ENCODE measurements at regions of chr2 and their contacts with region 1.

Region 1: DNA sequence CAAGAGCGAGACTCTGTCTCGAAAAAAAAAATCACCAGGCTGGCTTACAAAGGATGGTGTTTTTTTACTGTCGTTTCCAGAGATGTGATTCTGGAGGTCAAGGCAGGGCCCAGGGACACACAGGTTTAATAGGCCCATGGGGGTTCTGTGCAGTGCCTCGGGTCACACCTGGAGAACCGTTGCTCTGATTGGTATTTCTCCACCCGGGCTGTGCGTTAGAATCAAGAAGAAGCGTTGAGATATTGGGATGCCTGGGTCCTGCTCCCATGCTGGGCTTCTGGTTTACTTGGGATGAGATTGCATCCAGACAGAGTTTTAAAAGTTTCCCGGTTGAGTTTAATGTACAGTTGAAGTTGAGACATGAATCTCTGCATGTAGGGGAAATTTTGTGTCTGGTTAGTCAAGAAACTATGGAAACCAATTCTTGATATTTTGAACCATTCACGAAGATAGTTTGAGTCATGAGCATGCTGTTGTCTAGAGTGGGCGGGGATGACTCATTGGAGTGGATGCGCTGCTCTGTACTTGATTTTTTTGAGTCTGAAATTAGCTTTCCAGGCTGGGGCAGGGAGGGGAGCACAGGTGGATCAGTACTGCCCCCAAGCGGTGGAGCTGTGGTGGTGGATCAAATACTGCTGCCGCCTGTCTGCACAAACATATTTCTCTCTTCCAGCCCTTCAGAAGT is 50.1 kb downstream of the GREB1 start:
- H3K4me3 ChIP-seq: no peak overlapping the region
- H3K27ac ChIP-seq: no peak overlapping the region
- H3K4me1 ChIP-seq: peaks cover 3% of the 10 kb centered on the region
- CTCF ChIP-seq: peak; percentile 81

Region 2: GRCh38 chr2:10832203-10832936 is 751.6 kb before region 1 on chr2:
- CTCF ChIA-PET with region 1: interaction called, 11 read pairs
- POLR2A ChIA-PET with region 1: no interaction called
- H3K4me3 ChIP-seq: no peak overlapping the region
- H3K27ac ChIP-seq: no peak overlapping the region
- H3K4me1 ChIP-seq: peaks cover 2% of the 10 kb centered on the region; the same call in 1 of the 2 replicates
- CTCF ChIP-seq: peak; percentile 95

Region 3: DNA sequence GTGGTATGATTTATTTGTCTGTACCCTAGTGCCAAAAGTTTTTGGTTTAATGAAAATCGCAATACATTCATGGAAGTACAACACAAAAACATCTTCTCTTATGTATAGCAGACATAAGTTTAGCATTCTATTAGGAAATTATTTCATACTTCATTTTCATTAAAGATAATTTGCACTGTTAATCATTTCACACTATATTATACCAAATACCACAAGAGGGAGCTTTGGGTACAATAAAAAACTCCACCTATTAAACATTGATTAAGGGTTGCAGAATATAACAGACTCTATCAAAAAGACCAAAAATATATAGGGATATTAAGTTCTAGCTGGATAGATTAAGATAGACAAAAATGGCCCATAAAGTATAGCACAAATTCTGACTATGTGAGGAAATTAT is 349.7 kb before region 1 on chr2:
- CTCF ChIA-PET with region 1: interaction called, 23 read pairs
- POLR2A ChIA-PET with region 1: no interaction called
- H3K4me3 ChIP-seq: no peak overlapping the region
- H3K27ac ChIP-seq: no peak overlapping the region
- H3K4me1 ChIP-seq: no peaks in the 10 kb centered on the region
- CTCF ChIP-seq: peak; percentile 40; the same call in 1 of the 2 replicates

Region 4: DNA sequence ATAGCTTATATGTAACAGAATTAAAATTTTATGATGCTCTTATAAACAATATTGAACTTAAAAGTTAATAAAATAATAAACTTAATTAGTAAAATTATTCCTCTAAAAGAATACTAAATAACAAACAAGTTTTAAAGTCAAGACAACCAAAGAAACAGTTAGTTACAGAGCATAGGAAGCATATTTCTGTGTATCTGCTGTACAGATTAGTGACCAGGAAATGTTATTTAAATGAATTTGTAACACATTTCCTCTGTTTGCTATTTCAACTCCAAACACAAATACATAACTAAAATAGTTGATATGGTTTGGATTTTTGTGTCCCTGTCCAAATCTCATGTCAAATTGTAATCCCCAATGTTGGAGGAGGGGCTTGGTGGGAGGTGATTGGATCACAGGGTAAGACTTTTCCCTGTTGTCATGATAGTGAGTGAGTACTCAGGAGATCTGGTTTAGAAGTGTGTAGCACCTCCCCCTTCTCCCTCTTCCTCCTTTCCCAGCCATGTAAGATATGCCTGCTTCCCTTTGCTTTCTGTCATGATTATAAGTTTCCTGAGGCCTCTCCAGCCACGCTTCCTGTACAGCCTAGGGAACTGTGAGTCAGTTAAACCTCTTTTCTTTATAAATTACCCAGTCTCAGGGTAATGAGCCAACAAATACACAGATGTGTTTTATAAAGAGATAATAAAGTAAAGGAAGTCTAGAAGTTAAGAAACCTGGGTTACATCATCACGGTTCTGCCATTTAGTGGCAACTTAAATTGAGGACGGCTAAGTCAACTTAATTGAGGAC is 291.3 kb before region 1 on chr2:
- CTCF ChIA-PET with region 1: no interaction called
- POLR2A ChIA-PET with region 1: no interaction called
- H3K4me3 ChIP-seq: no peak overlapping the region
- H3K27ac ChIP-seq: no peak overlapping the region
- H3K4me1 ChIP-seq: peaks cover 8% of the 10 kb centered on the region
- CTCF ChIP-seq: no peak

Region 5: GRCh38 chr2:11457935-11458334 is 126.0 kb before region 1 on chr2:
- CTCF ChIA-PET with region 1: interaction called, 13 read pairs
- POLR2A ChIA-PET with region 1: no interaction called
- H3K4me3 ChIP-seq: no peak overlapping the region
- H3K27ac ChIP-seq: no peak overlapping the region
- H3K4me1 ChIP-seq: no peaks in the 10 kb centered on the region
- CTCF ChIP-seq: no peak

Region 6: DNA sequence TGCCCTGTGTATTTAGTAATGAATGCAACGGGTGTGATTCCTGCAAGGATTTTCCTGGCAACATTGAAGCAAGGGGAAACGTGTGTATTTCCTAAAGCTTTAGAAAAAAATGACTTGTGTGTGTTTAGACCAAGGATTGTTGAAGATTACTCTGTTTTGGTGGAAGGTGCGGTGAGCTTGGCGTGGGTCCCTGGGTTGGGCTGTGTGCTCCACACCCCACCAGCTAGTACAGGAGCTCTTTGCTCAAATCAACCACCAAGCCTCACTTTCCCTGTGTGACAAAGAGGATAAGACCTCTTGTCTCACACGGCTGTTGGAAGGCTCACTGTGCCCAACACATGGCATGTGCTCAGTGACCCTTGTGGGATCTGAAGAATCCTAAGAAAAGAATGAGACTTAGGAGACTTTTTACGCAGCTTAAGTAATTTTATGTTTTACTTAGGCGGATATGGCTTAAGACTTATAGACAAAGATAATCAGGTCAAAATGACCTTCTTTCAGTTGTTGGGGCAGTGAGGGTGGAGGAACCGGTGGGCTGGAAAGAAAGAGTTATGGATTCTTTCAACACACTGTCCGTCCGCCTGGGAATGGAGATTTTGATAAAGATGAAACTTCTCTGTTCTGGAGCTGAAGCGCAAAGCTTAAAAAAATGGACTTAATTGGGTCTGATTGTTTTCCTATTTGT is 71.4 kb before region 1 on chr2:
- CTCF ChIA-PET with region 1: interaction called, 14 read pairs
- POLR2A ChIA-PET with region 1: no interaction called
- H3K4me3 ChIP-seq: no peak overlapping the region
- H3K27ac ChIP-seq: no peak overlapping the region
- H3K4me1 ChIP-seq: no peaks in the 10 kb centered on the region
- CTCF ChIP-seq: no peak

Region 7: DNA sequence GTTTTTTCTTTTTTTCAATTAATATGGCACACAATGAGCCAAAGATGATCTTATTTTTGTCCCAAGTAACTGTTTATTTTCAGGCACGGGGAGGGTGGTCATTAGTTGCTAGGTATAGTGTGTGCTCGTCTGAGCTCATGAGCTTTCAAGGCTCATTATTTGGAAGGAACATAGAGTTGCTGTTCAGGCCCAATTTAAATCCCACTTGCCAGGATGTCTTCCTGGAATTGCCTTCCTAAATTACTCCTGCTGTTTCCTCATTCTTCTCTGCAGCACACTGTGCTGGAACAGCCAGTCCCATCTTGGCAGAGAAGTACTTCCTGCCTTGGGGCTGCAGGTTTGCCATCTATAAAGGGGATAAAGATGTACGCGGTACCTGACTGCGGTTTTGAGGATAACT is 12.9 kb before region 1 on chr2:
- CTCF ChIA-PET with region 1: interaction called, 39 read pairs
- POLR2A ChIA-PET with region 1: no interaction called
- H3K4me3 ChIP-seq: no peak overlapping the region
- H3K27ac ChIP-seq: no peak overlapping the region
- H3K4me1 ChIP-seq: no peaks in the 10 kb centered on the region
- CTCF ChIP-seq: no peak

Region 8: GRCh38 chr2:11778923-11779757 is 195.2 kb after region 1 on chr2:
- CTCF ChIA-PET with region 1: interaction called, 11 read pairs
- POLR2A ChIA-PET with region 1: no interaction called
- H3K4me3 ChIP-seq: no peak overlapping the region
- H3K27ac ChIP-seq: no peak overlapping the region
- H3K4me1 ChIP-seq: no peaks in the 10 kb centered on the region
- CTCF ChIP-seq: peak; percentile 86